ENCODE measurements at regions of chr10 and their contacts with region 1.

Region 1: GRCh38 chr10:96229568-96230030 is 41.8 kb downstream of the BLNK start:
- DNase-seq: peak; percentile 82 to 86
- H3K4me3 ChIP-seq: no peak overlapping the region
- H3K27ac ChIP-seq: no peak overlapping the region
- H3K4me1 ChIP-seq: no peaks in the 10 kb centered on the region
- H3K27me3 ChIP-seq: no peaks in the 10 kb centered on the region
- CTCF ChIP-seq: peak in 5 of 6 experiments; percentile 49 to 100 (median 91)
- POLR2A ChIP-seq: no peak

Region 2: DNA sequence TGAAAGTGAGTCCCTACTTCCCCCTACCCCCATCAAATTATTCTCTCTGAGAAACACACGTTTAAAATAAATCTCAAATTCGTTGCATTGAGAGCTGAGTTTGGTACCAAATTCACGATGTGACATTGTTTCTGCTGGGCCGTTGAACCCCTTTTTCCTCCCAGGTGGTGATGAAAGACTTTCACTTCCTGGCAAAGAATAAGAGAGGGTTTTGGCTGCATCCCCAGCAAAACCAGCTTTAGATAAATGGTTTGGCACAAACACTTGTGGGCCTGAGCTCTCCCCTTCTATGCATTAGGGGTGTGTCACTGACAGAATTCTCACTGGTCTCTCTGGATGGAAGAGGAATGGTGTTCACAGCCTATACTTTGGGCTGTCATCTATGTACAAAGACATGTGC is 65.9 kb after region 1 on chr10:
- intact Hi-C with region 1: loop called (anchors 2 kb)
- DNase-seq: no peak
- H3K4me3 ChIP-seq: no peak overlapping the region
- H3K27ac ChIP-seq: no peak overlapping the region
- H3K4me1 ChIP-seq: no peaks in the 10 kb centered on the region
- H3K27me3 ChIP-seq: no peaks in the 10 kb centered on the region
- CTCF ChIP-seq: no peak
- POLR2A ChIP-seq: no peak

Measured in thyroid gland (tissue), 4 donors.